ENCODE measurements at regions of chr9 and their contacts with region 1.

Region 1: GRCh38 chr9:113275157-113276131 is at the starts of genes CDC26 and PRPF4:
- DNase-seq: peak; percentile 94
- H3K4me3 Mint-ChIP-seq: no peak within 1 kb of the TSS
- H3K27ac Mint-ChIP-seq: no peak within 1 kb of the TSS
- H3K4me1 Mint-ChIP-seq: peaks cover 30% of the 10 kb centered on the region
- H3K27me3 Mint-ChIP-seq: no peaks in the 10 kb centered on the region
- total RNA-seq, gene CDC26: 49.9 and 50.6 TPM in 2 replicates
- total RNA-seq, gene PRPF4: 59.2 and 60.2 TPM in 2 replicates

Region 2: GRCh38 chr9:113150670-113151611 is 124.5 kb before region 1 on chr9 and contains the start of gene SLC31A2:
- intact Hi-C with region 1: loop called (anchors 1 kb)
- DNase-seq: peak; percentile 84
- H3K4me3 Mint-ChIP-seq: peak within 1 kb of the TSS; percentile 80
- H3K27ac Mint-ChIP-seq: peak within 1 kb of the TSS; percentile 44
- H3K4me1 Mint-ChIP-seq: peaks cover 34% of the 10 kb centered on the region
- H3K27me3 Mint-ChIP-seq: peaks cover 13% of the 10 kb centered on the region
- total RNA-seq, gene SLC31A2: 6.0 and 6.5 TPM in 2 replicates

Region 3: DNA sequence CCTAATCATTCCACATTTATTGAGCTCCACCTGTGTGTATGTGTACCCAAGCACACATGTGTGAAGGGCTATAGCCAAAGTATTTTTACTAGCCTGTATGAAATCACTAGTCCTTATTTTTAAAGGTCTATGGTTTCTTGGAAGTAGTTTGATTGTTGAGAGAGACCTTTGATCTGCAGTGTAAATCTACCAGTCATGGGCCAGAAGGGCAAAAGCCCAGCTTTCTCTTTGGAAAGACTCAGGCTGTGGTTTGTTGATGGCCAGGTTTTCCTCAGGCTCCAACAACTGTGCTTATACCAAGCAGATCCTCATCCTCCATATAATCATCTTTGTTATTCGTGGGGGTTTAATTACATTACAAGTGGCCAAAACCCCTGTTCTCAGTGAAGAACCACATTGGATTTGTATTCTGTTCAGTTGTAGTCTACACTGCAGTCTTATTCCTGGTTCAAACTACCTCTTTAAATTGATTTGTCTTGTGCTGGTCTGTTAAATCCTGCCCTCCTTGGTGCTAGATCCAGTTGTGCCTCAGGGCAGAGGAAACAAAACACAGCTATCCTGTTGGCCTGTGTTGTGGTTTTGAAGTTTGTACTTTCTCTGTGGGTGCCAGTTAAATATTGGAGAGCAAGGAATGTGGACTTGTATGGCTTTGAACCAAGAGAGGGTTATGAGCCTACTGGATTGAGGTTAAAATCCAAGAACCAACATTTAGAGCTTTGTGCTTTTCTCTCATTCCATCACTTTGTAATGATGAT is 13.3 kb before region 1 on chr9:
- intact Hi-C with region 1: no loop called
- DNase-seq: no peak
- H3K4me3 Mint-ChIP-seq: no peak overlapping the region
- H3K27ac Mint-ChIP-seq: no peak overlapping the region
- H3K4me1 Mint-ChIP-seq: peaks cover 4% of the 10 kb centered on the region
- H3K27me3 Mint-ChIP-seq: no peaks in the 10 kb centered on the region

Region 4: GRCh38 chr9:113340017-113340699 is 64.7 kb after region 1 on chr9 and contains the start of gene WDR31:
- intact Hi-C with region 1: loop called (anchors 1 kb)
- DNase-seq: peak; percentile 78
- H3K4me3 Mint-ChIP-seq: peak within 1 kb of the TSS; percentile 80
- H3K27ac Mint-ChIP-seq: peak within 1 kb of the TSS; percentile 89
- H3K4me1 Mint-ChIP-seq: peaks cover 49% of the 10 kb centered on the region
- H3K27me3 Mint-ChIP-seq: no peaks in the 10 kb centered on the region
- total RNA-seq, gene WDR31: 1.9 and 2.2 TPM in 2 replicates

Region 5: GRCh38 chr9:113376634-113377567 is 101.5 kb after region 1 on chr9 and contains the start of gene HDHD3:
- intact Hi-C with region 1: loop called (anchors 1 kb)
- DNase-seq: peak; percentile 78
- H3K4me3 Mint-ChIP-seq: peak within 1 kb of the TSS; percentile 83
- H3K27ac Mint-ChIP-seq: peak within 1 kb of the TSS; percentile 71
- H3K4me1 Mint-ChIP-seq: peaks cover 18% of the 10 kb centered on the region
- H3K27me3 Mint-ChIP-seq: no peaks in the 10 kb centered on the region
- total RNA-seq, gene HDHD3: 15.7 and 18.5 TPM in 2 replicates

Region 6: GRCh38 chr9:113446323-113446740 is 170.9 kb after region 1 on chr9:
- intact Hi-C with region 1: loop called (anchors 2 kb)
- DNase-seq: no peak
- H3K4me3 Mint-ChIP-seq: no peak overlapping the region
- H3K27ac Mint-ChIP-seq: peak overlapping the region; percentile 37
- H3K4me1 Mint-ChIP-seq: no peaks in the 10 kb centered on the region
- H3K27me3 Mint-ChIP-seq: no peaks in the 10 kb centered on the region

Region 7: GRCh38 chr9:113657703-113658544 is 382.5 kb after region 1 on chr9:
- intact Hi-C with region 1: loop called (anchors 1 kb)
- DNase-seq: peak; percentile 55
- H3K4me3 Mint-ChIP-seq: no peak overlapping the region
- H3K27ac Mint-ChIP-seq: no peak overlapping the region
- H3K4me1 Mint-ChIP-seq: no peaks in the 10 kb centered on the region
- H3K27me3 Mint-ChIP-seq: peaks cover 12% of the 10 kb centered on the region

Region 8: DNA sequence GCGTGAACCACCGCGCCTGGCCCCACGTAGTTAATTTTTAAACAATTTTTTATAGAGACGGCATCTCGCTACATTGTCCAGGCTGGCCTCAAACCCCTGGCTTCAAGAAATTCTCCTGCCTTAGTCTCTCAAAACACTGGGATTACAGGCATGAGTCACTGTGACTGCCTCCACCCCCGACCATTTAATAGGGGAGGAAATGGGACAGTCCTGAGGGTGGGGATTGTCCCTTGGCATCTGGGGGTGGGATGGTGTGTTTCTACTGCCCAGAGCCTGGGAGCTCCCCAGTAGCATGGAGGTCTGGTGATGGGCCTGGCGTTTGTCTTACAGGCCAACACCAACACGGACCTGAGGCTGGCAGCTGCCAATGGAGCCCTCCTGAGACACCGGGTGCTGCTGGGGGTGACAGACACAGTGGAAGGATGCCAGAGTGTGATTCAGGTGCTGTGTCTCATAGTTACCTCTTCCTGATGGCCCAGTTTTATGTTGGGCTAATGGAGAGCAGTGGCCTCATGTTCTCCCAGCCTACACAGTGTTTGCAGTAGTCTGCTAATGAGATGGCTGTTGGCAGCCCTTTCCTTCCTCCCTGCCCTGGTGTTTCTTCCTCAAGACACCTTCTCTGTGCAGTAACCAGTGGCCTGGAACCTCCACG is 1358.1 kb after region 1 on chr9:
- intact Hi-C with region 1: no loop called
- DNase-seq: no peak
- H3K4me3 Mint-ChIP-seq: no peak overlapping the region
- H3K27ac Mint-ChIP-seq: no peak overlapping the region
- H3K4me1 Mint-ChIP-seq: no peaks in the 10 kb centered on the region
- H3K27me3 Mint-ChIP-seq: no peaks in the 10 kb centered on the region